A673 (cell line): ENCODE measurements at regions of chr15 and their contacts with region 1.

Region 1: DNA sequence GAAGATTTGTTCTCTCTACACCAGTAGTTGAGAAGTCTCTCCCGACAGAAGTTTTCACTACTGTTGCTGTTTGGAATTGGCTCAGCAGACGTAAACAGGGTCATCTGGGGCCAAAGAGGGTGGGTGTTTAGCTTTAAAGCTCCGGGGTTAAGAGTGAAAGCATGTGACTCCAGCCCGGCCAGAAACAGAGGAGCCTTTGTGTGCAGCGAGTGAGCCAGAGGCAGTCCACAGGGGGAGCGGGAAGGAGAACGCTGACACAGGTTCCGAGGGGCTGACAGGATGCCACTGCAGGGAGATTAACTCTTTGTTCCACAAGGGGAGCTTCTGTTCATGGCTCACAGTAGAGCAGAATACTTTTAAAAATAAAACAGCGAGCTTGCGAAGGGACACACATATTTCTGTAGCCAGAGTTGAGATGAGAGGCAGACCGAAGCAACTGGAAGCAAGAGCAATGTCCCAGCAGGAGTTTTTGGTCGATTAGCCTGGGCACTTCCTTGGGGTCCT is 26.9 kb downstream of the BMF start:
- DNase-seq: peak; percentile 77
- H3K4me3 ChIP-seq: peak overlapping the region; percentile 10
- H3K27ac ChIP-seq: peak overlapping the region; percentile 75
- H3K4me1 ChIP-seq: peaks cover 72% of the 10 kb centered on the region
- H3K27me3 ChIP-seq: no peaks in the 10 kb centered on the region
- CTCF ChIP-seq: no peak

Region 2: GRCh38 chr15:39997031-39997430 is 84.7 kb before region 1 on chr15:
- CTCF ChIA-PET with region 1: no interaction called
- POLR2A ChIA-PET with region 1: interaction called, 13 read pairs
- intact Hi-C with region 1: no loop called
- DNase-seq: no peak
- H3K4me3 ChIP-seq: no peak overlapping the region
- H3K27ac ChIP-seq: no peak overlapping the region
- H3K4me1 ChIP-seq: peaks cover 13% of the 10 kb centered on the region
- H3K27me3 ChIP-seq: no peaks in the 10 kb centered on the region
- CTCF ChIP-seq: no peak

Region 3: DNA sequence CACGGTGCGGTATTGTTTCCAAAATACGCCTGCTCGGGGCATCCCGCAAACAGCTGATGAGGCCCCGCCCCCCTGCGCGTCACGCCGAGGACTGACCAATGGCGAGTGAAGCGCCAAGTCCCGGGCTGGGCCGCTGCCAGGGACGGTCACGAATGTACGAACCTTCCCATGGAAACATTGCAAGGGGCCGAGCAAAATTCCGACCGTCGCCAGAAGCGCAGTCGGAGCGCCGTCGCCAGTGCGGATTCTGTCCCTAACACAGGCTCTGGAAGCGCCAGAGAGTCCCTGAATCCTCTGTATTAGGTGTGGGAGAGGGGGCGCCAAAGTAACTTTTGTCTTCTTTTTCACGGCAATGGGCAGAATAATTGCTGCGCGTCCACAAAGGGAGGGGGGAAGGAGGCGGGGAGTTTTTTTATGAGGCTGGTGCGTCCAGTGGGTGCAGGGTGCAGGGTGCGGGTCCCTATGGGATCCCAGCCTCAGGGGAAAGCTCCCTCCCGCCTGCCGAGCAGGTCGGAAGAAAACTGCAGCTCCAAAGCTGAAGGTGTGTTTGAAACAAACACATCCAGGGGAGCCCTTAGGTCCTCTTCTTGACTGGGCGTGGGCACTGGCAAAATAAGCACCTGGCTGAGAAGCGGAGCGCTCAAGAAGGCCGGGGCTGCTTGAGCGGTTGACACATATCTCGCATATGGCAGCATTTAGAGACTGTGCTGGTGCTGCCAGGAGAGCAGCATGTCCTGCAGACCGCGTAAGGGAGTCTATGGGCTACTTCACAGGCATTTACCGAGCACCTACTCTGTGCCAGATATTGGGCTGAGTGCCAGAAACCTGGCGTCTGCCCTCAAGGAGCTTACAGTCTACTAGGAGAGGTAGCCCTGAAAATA is 27.4 kb after region 1 on chr15 and contains the start of gene BMF:
- CTCF ChIA-PET with region 1: no interaction called
- POLR2A ChIA-PET with region 1: interaction called, 15 read pairs
- intact Hi-C with region 1: no loop called
- DNase-seq: peak; percentile 99
- H3K4me3 ChIP-seq: peak within 1 kb of the TSS; percentile 85
- H3K27ac ChIP-seq: peak within 1 kb of the TSS; percentile 75
- H3K4me1 ChIP-seq: peaks cover 38% of the 10 kb centered on the region
- H3K27me3 ChIP-seq: no peaks in the 10 kb centered on the region
- CTCF ChIP-seq: peak; percentile 59
- total RNA-seq, gene BMF: 18.5 and 29.9 TPM in 2 replicates

Region 4: GRCh38 chr15:40160689-40161688 is 79.2 kb after region 1 on chr15 and contains the start of gene BUB1B:
- CTCF ChIA-PET with region 1: no interaction called
- POLR2A ChIA-PET with region 1: interaction called, 17 read pairs
- intact Hi-C with region 1: no loop called
- DNase-seq: peak; percentile 97
- H3K4me3 ChIP-seq: peak within 1 kb of the TSS; percentile 81
- H3K27ac ChIP-seq: peak within 1 kb of the TSS; percentile 79
- H3K4me1 ChIP-seq: peaks cover 17% of the 10 kb centered on the region
- H3K27me3 ChIP-seq: no peaks in the 10 kb centered on the region
- CTCF ChIP-seq: no peak
- total RNA-seq, gene BUB1B: 190 and 196 TPM in 2 replicates

Region 5: GRCh38 chr15:40175160-40175559 is 93.4 kb after region 1 on chr15:
- CTCF ChIA-PET with region 1: no interaction called
- POLR2A ChIA-PET with region 1: interaction called, 15 read pairs
- intact Hi-C with region 1: no loop called
- DNase-seq: no peak
- H3K4me3 ChIP-seq: no peak overlapping the region
- H3K27ac ChIP-seq: no peak overlapping the region
- H3K4me1 ChIP-seq: no peaks in the 10 kb centered on the region
- H3K27me3 ChIP-seq: no peaks in the 10 kb centered on the region
- CTCF ChIP-seq: no peak